Activated naive CD4-positive, alpha-beta T cell treated with anti-CD3 and anti-CD28 coated beads for 36 hours (primary cell): ENCODE measurements at regions of chr11 and their contacts with region 1.

Region 1: DNA sequence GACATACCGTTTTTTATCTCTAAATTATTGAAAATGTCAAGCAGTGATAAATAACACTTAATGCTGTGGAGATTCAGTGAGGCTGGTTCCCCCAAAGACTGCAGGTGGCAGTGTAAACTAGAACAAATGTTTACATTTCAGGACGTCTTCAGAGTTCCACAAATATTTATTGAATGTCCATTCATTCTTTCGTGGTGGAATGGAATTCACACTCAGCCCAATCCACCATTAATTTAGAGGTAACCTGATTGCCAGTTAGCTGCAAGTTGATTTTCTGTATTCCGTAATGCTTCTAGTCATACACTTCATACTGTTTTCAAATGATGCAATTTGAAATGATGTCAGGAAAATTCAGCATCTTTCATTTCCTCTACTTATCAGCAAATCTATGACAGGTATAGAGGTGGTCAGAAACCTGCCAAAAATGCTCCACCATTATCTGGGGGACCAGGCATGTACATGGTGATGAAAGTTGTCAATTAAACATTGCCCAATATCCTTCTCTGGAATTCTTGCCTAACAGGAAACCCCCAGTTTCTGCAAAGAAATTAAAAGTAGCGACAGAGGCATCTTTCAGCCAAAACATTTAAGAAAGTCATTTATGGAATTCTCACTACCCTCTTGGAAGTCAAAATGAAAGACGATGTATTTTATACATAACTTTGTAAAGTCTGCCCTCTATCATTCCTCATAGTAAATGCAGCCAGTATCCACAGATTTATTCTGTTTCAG is 94.3 kb upstream of the BMAL1 start:
- DNase-seq: peak; percentile 13
- H3K4me3 Mint-ChIP-seq: no peak overlapping the region
- H3K27ac Mint-ChIP-seq: no peak overlapping the region
- H3K4me1 Mint-ChIP-seq: peaks cover 6% of the 10 kb centered on the region
- H3K27me3 Mint-ChIP-seq: peaks cover 9% of the 10 kb centered on the region

Region 2: GRCh38 chr11:12599408-12600143 is 583.7 kb before region 1 on chr11:
- CTCF ChIA-PET with region 1: no interaction called
- intact Hi-C with region 1: loop called (anchors 2 kb)
- DNase-seq: peak; percentile 58
- H3K4me3 Mint-ChIP-seq: no peak overlapping the region
- H3K27ac Mint-ChIP-seq: no peak overlapping the region
- H3K4me1 Mint-ChIP-seq: peaks cover 14% of the 10 kb centered on the region
- H3K27me3 Mint-ChIP-seq: peaks cover 18% of the 10 kb centered on the region

Region 3: DNA sequence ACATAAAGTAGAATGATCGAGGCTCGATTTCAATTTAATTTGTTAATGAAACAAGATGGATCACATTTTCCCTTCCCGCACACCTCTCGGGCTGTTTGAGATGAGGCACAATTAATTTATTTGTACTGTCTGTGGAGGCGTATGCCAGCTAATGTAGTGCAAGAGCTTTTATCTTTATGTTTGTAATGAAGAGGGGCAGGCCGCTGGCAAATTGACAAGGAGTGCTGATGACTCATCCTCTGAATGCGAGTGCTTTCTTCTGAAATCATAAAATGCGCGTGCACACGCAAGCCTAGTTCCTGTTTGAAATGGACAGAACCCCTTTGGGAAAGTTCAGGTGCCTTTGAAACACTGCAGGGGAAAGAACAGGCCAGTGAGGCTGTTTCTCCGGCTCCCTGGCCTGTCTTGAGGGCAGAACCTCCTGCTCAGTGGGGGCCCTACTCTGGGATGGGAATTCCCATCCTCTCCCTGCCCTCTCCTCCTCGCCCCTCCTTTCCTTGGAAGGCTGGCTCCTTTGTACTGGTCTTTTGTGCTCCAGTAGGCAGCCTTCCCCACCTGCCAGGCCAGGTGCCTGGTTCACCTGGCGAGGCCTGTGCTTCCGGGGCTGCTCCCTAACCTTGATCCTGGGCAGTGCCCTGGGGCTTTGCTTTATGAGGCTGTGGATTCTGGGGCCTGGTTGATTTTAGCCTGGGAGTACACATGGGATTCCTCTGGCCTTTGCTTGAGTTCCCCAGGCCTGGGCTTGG is 458.8 kb before region 1 on chr11:
- CTCF ChIA-PET with region 1: no interaction called
- intact Hi-C with region 1: no loop called
- DNase-seq: peak; percentile 20
- H3K4me3 Mint-ChIP-seq: no peak overlapping the region
- H3K27ac Mint-ChIP-seq: no peak overlapping the region
- H3K4me1 Mint-ChIP-seq: no peaks in the 10 kb centered on the region
- H3K27me3 Mint-ChIP-seq: peaks cover 66% of the 10 kb centered on the region

Region 4: DNA sequence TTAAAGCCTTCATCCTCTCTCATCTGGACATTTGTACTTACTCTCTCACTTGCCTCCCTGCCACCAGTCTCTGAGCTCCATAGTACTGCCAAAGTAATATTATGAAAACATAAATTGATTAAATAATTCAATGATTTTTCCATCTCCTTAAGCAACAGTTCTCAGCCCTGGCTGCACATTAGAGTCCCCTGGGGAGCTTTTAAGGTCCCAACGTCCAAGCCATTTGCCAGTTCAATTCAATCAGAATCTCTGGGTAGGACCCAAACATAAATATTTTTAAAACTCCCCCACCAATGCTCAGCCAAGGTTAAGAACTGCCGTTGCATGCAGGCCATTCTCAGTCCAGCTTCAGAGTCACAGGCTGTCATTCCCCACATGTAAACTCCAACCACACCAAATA is 20.1 kb before region 1 on chr11:
- CTCF ChIA-PET with region 1: no interaction called
- intact Hi-C with region 1: no loop called
- DNase-seq: no peak
- H3K4me3 Mint-ChIP-seq: no peak overlapping the region
- H3K27ac Mint-ChIP-seq: no peak overlapping the region
- H3K4me1 Mint-ChIP-seq: no peaks in the 10 kb centered on the region
- H3K27me3 Mint-ChIP-seq: peaks cover 9% of the 10 kb centered on the region

Region 5: GRCh38 chr11:13238879-13239514 is 55.7 kb after region 1 on chr11:
- CTCF ChIA-PET with region 1: interaction called, 3 read pairs
- intact Hi-C with region 1: loop called (anchors 1 kb)
- DNase-seq: peak; percentile 70
- H3K4me3 Mint-ChIP-seq: no peak overlapping the region
- H3K27ac Mint-ChIP-seq: no peak overlapping the region
- H3K4me1 Mint-ChIP-seq: no peaks in the 10 kb centered on the region
- H3K27me3 Mint-ChIP-seq: no peaks in the 10 kb centered on the region

Region 6: DNA sequence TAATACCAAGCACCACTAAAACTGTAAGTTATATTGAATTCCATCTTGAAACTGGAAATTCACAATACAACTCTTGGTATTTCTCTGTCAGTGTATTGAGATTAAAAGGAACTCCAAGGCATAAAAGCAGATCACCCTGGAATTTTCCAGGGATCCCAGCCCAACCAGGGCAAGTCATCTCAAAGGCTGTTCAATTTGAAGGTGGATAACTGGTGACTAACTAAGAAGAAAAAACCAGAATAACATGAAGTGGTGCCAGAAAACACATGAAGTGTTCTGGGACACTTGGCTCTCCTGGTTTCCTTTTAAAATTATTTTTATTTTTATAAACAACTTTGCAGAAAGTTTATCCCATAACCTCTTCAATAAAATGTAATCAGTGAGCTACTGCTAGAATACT is 86.5 kb after region 1 on chr11:
- CTCF ChIA-PET with region 1: no interaction called
- intact Hi-C with region 1: no loop called
- DNase-seq: no peak
- H3K4me3 Mint-ChIP-seq: no peak overlapping the region
- H3K27ac Mint-ChIP-seq: no peak overlapping the region
- H3K4me1 Mint-ChIP-seq: peaks cover 2% of the 10 kb centered on the region
- H3K27me3 Mint-ChIP-seq: peaks cover 5% of the 10 kb centered on the region

Region 7: DNA sequence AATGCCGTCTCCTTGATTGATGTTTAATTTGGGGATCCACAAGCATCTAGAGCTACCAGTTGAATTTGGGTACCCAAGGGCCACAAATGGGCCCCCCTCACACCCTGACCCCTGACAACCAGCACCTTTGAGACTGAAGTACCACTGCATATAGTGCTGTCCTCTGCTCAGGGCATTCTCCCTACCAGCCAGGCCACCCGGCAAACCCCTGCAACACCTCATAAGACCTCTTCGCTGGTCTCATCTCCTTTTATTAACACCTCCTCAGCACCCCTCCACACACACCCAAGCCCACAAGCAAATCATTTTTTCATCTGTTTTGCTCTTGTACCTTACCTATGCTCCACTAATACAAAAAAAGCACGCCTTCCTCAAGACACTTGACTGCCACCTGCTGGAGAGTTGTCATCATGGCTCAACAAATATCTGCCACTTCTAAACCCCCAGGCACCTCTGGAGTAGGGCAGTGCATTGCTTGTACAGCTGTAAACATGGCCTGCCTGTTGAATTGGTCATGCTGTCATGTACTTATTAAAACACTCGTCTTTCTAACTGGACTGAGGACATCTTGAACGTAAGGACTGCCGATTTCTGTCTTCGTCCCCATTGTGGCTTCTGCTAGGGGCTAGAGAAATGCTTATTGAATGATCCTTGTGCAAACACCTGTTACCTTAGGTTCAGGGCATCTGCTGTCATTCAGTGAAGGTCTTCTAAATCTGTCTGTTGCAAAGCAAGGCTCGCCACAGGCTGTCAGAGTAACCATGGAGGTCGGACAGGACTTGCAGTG is 160.9 kb after region 1 on chr11:
- CTCF ChIA-PET with region 1: interaction called, 4 read pairs
- intact Hi-C with region 1: loop called (anchors 1 kb)
- DNase-seq: peak; percentile 89
- H3K4me3 Mint-ChIP-seq: no peak overlapping the region
- H3K27ac Mint-ChIP-seq: no peak overlapping the region
- H3K4me1 Mint-ChIP-seq: peaks cover 41% of the 10 kb centered on the region
- H3K27me3 Mint-ChIP-seq: no peaks in the 10 kb centered on the region